Heart right ventricle (tissue), 16 donors: ENCODE measurements at regions of chr6 and their contacts with region 1.

Region 1: DNA sequence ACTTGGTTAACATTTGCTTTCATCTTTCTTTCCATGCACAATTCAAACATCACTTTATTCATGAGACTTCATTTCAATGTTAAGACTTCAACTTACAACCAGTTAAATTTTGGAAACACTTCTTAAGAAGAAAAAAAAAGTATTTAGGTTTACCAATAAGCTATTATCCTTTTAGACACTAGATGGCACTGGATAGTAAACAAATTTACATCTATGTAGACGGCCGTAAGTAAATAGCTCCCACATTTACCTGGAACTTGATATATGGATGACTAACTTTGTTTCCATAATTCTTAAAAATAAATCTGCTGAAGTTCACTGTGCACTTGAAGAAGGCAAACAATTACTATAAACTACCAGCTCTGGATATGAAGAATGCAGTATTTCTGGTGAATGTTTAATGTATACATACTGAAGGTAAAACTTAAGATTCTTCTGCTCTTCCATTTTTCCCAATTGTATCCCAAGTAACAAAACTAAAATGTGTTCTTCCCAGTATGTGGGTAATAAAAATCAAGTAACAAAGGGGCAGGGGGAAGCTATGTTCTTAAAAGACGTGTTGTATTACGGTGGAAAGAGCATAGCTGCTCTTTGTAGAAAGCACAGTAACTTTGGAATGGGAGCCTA is 130.6 kb upstream of the C6orf118 start:
- DNase-seq: no peak
- ATAC-seq: peak in 3 of 8 donors; percentile 44 to 69 (median 62)
- H3K4me3 ChIP-seq: no peak overlapping the region
- H3K27ac ChIP-seq: no peak overlapping the region
- H3K4me1 ChIP-seq: no peaks in the 10 kb centered on the region
- H3K27me3 ChIP-seq: no peaks in the 10 kb centered on the region
- CTCF ChIP-seq: peak; percentile 34 to 81 (median 70)

Region 2: GRCh38 chr6:165301372-165302246 is 138.4 kb before region 1 on chr6:
- intact Hi-C with region 1: no loop called
- DNase-seq: no peak
- ATAC-seq: no peak
- H3K4me3 ChIP-seq: no peak overlapping the region
- H3K27ac ChIP-seq: no peak overlapping the region
- H3K4me1 ChIP-seq: no peaks in the 10 kb centered on the region
- H3K27me3 ChIP-seq: no peaks in the 10 kb centered on the region
- CTCF ChIP-seq: no peak

Region 3: GRCh38 chr6:165729307-165729936 is 289.4 kb after region 1 on chr6:
- intact Hi-C with region 1: loop called in 7 of 10 experiments (anchors 5 to 10 kb)
- DNase-seq: peak in 1 of 2 donors; percentile 55
- ATAC-seq: peak in 4 of 8 donors; percentile 46 to 65 (median 49)
- H3K4me3 ChIP-seq: no peak overlapping the region
- H3K27ac ChIP-seq: no peak overlapping the region
- H3K4me1 ChIP-seq: peaks cover 0 to 8% (median 0%) of the 10 kb centered on the region in 9 donors
- H3K27me3 ChIP-seq: no peaks in the 10 kb centered on the region
- CTCF ChIP-seq: peak; percentile 81 to 89 (median 87)

Region 4: DNA sequence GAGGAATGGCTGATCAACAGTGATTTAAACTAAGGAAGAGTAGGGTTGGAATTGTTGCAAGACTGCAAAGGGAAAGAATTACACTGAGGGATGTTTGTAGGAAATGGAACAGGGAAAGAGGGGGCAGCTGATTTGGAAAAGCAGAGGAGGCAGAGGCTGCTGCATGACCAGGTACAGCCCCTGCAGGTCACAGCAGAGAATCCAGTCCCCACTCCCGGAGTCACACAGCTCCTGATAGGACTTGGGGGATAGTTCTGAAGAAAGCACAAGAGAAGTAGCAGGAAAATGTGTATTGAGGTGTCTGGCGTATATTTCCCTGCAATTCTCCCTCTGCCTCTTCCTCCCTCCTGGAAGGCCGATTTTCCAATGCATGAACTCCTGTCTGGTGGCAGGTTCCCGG is 315.5 kb after region 1 on chr6:
- intact Hi-C with region 1: loop called in 1 of 10 experiments (anchors 5 kb)
- DNase-seq: no peak
- ATAC-seq: no peak
- H3K4me3 ChIP-seq: no peak overlapping the region
- H3K27ac ChIP-seq: no peak overlapping the region
- H3K4me1 ChIP-seq: no peaks in the 10 kb centered on the region
- H3K27me3 ChIP-seq: no peaks in the 10 kb centered on the region
- CTCF ChIP-seq: peak in 1 of 9 donors; percentile 15